PC-9 (cell line): ENCODE measurements at regions of chr10 and their contacts with region 1.

Region 1: DNA sequence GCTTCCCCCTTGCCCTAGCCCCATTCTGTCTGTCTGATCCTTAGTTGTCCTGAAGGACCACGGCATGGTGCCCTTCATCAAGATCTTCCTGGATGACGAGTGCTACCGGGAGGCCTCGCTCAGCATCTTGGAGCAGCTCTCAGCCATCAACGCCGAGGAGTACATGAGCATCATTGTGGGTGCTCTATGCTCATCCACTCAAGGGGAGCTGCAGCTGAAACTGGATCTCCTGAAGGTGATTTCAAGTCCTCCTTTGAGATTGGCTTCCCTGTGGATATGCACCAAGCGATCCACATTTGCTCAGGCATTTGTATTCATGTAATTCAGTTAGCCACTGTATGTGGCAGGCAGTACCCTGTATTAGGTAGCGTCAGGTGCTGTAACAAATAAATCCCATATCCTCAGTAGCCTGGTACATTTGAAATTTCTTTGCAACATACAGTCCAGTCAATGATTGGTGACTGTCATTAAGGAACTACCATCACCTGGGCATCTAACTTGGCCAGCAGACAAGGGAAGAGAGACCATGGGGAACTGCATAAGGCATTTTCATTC is 51.2 kb downstream of the WDFY4 start:
- DNase-seq: no peak
- H3K4me3 ChIP-seq: no peak overlapping the region
- H3K27ac ChIP-seq: no peak overlapping the region
- H3K4me1 ChIP-seq: no peaks in the 10 kb centered on the region
- H3K27me3 ChIP-seq: peaks cover 85% of the 10 kb centered on the region
- CTCF ChIP-seq: no peak

Region 2: DNA sequence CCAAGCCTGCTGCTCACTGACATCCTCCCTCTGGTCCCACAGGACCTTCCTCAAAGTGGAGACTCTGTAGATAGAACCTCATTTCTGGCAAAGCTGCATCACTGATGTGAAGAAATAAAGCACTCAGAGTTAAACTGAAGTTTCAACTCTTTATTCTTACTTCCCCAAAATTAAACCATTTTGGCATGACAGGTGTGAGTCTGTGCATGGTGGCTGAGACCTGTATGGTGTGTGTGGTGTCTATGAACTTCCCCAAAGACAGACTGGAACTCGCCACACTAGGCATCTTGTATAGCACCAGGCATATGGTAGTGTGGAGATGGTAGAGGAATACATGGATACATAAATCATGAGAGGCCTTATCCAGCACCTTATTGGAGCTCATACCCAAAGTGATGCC is 57.9 kb before region 1 on chr10:
- CTCF ChIA-PET with region 1: no interaction called
- POLR2A ChIA-PET with region 1: no interaction called
- intact Hi-C with region 1: loop called (anchors 2 kb)
- DNase-seq: no peak
- H3K4me3 ChIP-seq: no peak overlapping the region
- H3K27ac ChIP-seq: no peak overlapping the region
- H3K4me1 ChIP-seq: no peaks in the 10 kb centered on the region
- H3K27me3 ChIP-seq: peaks cover 32% of the 10 kb centered on the region; the same call in 1 of the 2 replicates
- CTCF ChIP-seq: no peak

Region 3: DNA sequence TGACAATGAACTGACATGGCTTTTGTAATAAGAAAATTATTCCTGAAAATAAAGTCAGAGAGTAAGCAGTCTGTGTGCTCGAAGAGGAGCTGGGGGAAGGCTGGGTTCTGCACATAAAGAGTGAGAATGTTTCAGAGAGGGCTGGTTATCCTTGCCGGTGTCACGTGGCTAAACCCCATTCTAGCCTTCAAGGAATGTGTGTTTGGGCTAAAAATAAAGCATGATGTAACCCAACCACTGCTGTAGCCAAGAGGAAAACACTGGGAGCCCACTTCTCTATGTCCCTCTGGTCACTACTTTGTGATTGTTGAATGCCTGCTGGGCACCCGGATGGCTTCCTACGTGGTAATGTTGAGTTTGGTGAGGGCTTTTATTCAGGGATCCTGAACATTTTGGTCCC is 27.8 kb before region 1 on chr10:
- CTCF ChIA-PET with region 1: no interaction called
- POLR2A ChIA-PET with region 1: no interaction called
- intact Hi-C with region 1: no loop called
- DNase-seq: no peak
- H3K4me3 ChIP-seq: no peak overlapping the region
- H3K27ac ChIP-seq: no peak overlapping the region
- H3K4me1 ChIP-seq: no peaks in the 10 kb centered on the region
- H3K27me3 ChIP-seq: peaks cover 75% of the 10 kb centered on the region
- CTCF ChIP-seq: no peak

Region 4: GRCh38 chr10:50396491-50397311 is 1660.8 kb after region 1 on chr10:
- CTCF ChIA-PET with region 1: no interaction called
- POLR2A ChIA-PET with region 1: no interaction called
- intact Hi-C with region 1: no loop called
- DNase-seq: peak in 1 of 2 experiments; percentile 78
- H3K4me3 ChIP-seq: no peak overlapping the region
- H3K27ac ChIP-seq: peak overlapping the region; percentile 86
- H3K4me1 ChIP-seq: peaks cover 63% of the 10 kb centered on the region
- H3K27me3 ChIP-seq: no peaks in the 10 kb centered on the region
- CTCF ChIP-seq: no peak